Dendritic cell treated with granulocyte-macrophage colony-stimulating factor and Interleukin-4, amounts not matched to agents 40 ng/mL and 50 ng/mL, for 4 days (primary cell): ENCODE measurements at regions of chr11 and their contacts with region 1.

Region 1: DNA sequence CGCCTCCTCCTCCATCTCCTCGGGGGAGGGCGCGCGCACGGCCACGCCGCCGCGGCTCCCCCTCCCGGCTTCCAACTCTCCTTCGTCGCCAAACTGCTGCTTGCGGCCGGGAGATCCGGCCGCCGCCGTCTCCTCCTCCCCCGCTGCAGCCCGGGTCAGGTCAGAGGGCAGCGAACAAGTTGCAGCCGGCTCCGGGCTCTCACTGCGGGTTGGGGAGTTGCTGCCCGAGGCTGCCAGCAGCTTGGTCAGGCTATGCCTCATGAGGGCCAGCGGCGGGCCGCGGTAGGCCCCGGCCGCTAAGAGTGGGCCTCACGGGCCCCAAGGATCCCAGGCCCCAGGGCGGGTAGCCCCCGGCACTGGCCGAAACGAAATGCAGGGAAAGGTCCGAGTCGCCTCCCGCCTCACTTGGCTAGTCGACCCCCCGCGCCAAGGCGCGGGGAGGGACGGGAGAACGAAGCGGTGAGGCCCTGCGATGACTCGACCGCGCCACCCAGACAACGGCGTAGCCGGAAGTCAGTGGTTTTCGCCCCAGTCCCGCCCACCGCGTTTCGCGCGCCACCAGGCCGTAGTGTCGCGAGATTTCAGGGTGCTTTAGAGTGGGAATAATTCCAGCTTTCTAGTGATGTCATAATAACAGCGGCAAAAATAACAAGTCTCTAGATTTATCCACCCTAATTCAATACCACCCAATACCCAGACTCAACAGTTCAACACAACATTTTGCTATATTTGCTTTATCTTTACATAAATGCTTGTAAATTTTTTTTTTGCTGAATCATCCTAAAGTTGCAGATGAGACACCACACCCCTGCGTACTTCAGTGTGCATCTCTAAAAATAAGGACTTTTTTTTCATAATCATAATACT is at the start of gene CREBZF:
- H3K4me3 Mint-ChIP-seq: peak within 1 kb of the TSS; percentile 99
- H3K27ac Mint-ChIP-seq: peak within 1 kb of the TSS; percentile 93
- H3K4me1 Mint-ChIP-seq: peaks cover 33% of the 10 kb centered on the region
- H3K27me3 Mint-ChIP-seq: no peaks in the 10 kb centered on the region

Region 2: DNA sequence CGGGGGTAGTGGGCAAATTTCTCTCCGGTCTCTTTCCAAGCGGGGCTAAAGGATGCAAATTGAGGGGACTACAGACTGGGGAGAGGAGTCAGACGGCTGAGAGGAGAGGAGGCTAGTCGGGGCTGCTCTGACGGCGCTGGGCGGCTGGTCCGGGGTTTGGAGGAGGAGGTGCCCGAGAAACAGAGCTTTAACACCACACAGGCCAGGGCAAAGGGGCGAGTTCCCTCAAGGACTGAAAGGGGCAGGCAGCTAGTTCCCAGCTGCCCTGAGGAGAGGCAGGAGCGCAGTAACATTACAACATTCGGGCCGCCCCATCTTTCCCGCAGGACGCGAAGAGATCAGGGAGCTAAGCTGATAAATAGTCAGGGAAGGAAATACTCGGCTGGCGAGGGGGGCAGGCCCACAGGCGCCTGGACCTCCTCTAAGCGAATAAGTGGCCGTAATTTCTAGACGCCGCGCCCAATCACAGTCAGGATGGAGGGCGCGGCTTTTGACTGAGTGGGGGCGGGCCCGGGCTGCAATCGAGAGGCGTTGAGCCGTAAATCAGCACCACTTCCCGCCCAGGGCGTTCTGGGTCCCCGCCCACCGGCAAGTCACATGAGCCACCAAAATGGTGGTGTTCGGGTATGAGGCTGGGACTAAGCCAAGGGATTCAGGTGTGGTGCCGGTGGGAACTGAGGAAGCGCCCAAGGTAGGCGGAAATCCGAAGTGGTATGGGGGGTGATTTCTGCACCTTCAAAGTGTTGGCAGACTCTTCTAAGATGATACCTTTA is 36.7 kb before region 1 on chr11 and contains the start of gene TMEM126B:
- intact Hi-C with region 1: loop called (anchors 1 kb)
- H3K4me3 Mint-ChIP-seq: peak within 1 kb of the TSS; percentile 95
- H3K27ac Mint-ChIP-seq: peak within 1 kb of the TSS; percentile 93
- H3K4me1 Mint-ChIP-seq: peaks cover 21% of the 10 kb centered on the region
- H3K27me3 Mint-ChIP-seq: peaks cover 2% of the 10 kb centered on the region

Region 3: DNA sequence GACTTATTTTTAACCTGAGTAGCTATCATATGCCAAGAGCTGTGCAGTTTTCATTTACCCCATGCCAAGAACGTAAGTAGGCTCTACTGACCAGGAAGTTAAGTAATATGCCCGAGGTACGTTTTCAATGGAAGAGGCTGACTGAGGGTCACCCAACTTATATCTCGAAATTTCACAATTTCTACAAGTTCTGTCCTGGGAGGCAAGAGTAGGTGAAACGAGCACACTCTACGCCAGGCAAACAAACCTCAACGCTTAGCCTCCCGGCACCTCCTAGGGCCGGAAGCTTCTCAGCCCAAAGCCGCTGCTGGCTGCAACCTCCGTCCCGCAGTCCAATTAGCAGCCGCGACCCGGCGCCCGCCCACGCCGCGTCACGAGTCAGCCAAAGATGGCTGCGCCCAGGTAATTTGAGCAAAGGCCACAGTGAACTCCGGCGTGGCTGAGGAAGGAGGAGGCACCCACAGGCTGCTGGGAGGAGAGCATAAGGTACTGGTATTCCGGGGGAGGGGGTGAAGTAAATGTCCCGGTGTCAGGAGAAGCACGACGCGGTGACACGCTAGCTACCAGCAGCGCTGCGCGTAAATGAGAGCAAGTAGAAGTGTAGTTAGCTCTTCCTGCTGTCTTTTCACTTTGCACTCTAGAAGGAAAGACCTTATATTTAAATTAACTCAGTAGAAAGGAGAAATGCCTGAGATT is 17.1 kb before region 1 on chr11 and contains the start of gene TMEM126A:
- intact Hi-C with region 1: loop called (anchors 1 kb)
- H3K4me3 Mint-ChIP-seq: peak within 1 kb of the TSS; percentile 95
- H3K27ac Mint-ChIP-seq: peak within 1 kb of the TSS; percentile 88
- H3K4me1 Mint-ChIP-seq: peaks cover 6% of the 10 kb centered on the region
- H3K27me3 Mint-ChIP-seq: peaks cover 23% of the 10 kb centered on the region

Region 4: GRCh38 chr11:85682330-85683305 is 17.8 kb after region 1 on chr11:
- intact Hi-C with region 1: no loop called
- H3K4me3 Mint-ChIP-seq: peak overlapping the region; percentile 78
- H3K27ac Mint-ChIP-seq: peak overlapping the region; percentile 83
- H3K4me1 Mint-ChIP-seq: peaks cover 23% of the 10 kb centered on the region
- H3K27me3 Mint-ChIP-seq: peaks cover 3% of the 10 kb centered on the region

Region 5: GRCh38 chr11:85694386-85694980 is 29.6 kb after region 1 on chr11:
- intact Hi-C with region 1: no loop called
- H3K4me3 Mint-ChIP-seq: no peak overlapping the region
- H3K27ac Mint-ChIP-seq: no peak overlapping the region
- H3K4me1 Mint-ChIP-seq: peaks cover 14% of the 10 kb centered on the region
- H3K27me3 Mint-ChIP-seq: peaks cover 4% of the 10 kb centered on the region

Region 6: DNA sequence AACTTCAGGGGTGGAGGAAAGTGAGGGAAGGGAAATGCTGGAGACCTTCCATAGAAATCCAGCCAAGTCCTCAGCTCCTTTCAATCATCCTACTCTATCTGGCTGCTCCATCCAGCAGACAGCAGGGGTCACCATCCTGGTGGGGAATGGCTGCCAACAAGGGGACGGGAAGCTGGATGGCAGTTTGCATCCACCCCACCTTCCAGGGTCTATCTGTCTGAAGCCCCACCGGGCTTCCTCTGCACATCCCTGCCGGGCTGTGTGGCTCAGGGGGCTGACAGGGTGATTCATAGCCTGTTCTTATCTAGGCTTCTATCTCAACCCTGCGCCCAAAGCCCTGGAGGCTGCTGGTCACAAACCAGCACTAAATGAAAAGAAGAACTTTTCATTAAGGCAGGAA is 145.0 kb after region 1 on chr11:
- intact Hi-C with region 1: no loop called
- H3K4me3 Mint-ChIP-seq: peak overlapping the region; percentile 79
- H3K27ac Mint-ChIP-seq: no peak overlapping the region
- H3K4me1 Mint-ChIP-seq: peaks cover 19% of the 10 kb centered on the region
- H3K27me3 Mint-ChIP-seq: peaks cover 29% of the 10 kb centered on the region

Region 7: GRCh38 chr11:86244522-86245368 is 579.9 kb after region 1 on chr11 and contains the start of gene EED:
- intact Hi-C with region 1: loop called (anchors 10 kb)
- H3K4me3 Mint-ChIP-seq: no peak within 1 kb of the TSS
- H3K27ac Mint-ChIP-seq: no peak within 1 kb of the TSS
- H3K4me1 Mint-ChIP-seq: peaks cover 26% of the 10 kb centered on the region
- H3K27me3 Mint-ChIP-seq: no peaks in the 10 kb centered on the region

Region 8: DNA sequence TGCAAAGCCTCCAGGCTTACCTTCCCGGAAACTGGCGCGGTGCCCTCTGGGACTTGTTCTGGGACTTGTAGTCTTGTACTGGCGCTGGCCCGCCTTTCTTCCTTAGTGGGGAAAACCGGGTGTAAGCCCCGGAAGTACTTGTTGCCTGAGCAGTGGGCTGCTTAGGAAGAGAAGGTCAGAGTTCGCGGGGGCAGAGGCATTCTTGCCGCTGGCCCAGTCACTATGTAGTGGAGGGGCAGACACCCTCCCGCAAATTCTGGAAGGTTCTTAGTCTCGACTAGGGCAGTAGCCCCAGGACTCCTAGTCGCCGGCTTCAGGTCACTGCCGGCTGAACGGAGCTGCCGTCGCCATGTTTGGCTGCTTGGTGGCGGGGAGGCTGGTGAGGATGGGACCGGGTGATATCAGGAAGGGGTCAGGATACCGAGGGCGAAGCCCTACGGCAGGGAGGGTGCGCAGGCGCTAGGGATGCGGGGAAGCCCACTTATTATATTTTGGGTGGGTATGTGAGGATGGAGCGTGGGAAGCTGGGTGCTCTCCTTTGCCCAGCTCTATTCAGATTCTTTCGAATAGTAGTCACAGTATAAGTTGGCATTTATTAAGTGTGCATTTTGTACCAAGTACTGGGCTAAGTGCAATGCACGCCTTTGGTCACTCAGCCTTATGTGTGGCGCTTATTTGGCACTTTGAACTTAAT is 637.4 kb after region 1 on chr11 and contains the start of gene HIKESHI:
- intact Hi-C with region 1: loop called (anchors 2 kb)
- H3K4me3 Mint-ChIP-seq: peak within 1 kb of the TSS; percentile 97
- H3K27ac Mint-ChIP-seq: peak within 1 kb of the TSS; percentile 95
- H3K4me1 Mint-ChIP-seq: peaks cover 20% of the 10 kb centered on the region
- H3K27me3 Mint-ChIP-seq: peaks cover 1% of the 10 kb centered on the region